Lower leg skin (tissue), 4 donors: ENCODE measurements at regions of chr21 and their contacts with region 1.

Region 1: DNA sequence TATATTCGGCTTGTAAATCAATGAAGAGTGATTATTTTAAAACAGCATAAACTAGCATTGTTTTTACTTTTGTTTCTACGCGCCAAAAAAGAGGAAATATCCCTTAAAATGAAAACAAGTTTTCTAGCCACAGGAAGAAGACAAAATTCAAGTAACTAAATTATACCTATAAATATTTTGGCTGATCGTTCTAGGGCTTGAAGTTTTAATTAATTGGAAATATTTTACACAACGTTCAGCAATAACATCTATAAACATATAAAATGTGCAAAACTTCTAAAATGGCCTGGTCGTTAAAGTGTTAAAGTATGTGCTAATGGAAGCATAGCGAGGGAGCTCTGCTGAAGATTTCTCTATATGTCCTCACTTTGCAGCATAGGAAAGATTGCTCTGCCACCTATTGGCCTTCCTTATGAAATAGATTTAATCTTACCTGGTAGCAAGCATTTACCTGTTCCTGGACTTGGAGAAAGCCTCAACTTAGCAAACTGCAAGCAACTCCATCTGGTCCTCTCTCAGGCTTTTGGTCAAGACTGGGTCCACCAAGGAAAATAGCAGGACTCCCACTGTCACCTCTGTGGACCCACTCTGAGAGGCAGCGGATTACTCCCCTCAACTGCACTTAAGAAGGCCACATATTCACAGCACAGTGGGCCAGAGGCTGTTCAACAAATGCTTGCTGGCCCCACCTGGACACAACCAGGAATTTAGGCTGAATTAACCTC is 351.3 kb upstream of the RUNX1 start:
- DNase-seq: peak in 1 of 2 donors; percentile 15
- H3K4me3 ChIP-seq: no peak overlapping the region
- CTCF ChIP-seq: no peak
- POLR2A ChIP-seq: no peak

Region 2: DNA sequence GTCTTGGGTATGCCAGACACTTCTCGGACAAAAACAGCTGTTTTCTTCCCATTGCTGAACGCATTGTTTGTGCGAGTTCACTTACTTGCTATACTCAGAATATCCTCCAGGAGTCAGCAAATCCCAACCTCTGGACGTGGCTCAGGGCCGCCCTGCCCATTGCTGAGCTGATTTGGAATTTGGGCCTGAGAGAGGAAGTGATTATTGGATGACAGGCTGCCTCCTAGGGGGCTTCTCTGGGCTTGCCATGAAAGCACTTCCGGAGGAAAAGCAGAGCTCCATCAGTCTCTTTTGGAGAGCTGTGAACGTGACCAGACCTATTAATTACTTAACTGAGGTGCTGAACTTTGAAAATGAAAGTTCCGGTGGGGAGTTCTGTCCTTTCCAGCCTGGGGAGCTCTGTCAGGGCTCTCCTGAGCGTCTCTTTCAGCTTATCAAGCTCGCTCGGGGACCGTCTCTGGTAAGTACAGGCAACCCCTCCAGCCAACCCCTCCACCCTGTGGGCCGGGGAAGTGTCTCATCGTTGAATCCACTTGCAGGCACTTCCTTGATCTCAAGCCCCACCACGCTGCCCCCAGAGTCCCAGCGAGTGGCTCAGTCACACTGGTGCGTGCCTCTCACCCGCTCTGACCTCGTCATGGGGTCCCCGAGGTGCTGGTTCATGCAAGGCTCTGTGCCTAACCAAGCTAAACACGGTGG is 654.7 kb before region 1 on chr21:
- intact Hi-C with region 1: loop called (anchors 5 kb)
- DNase-seq: peak; percentile 69 to 92
- H3K4me3 ChIP-seq: no peak overlapping the region
- CTCF ChIP-seq: peak in 1 of 3 donors; percentile 76
- POLR2A ChIP-seq: no peak

Region 3: GRCh38 chr21:34900376-34900775 is 500.0 kb before region 1 on chr21:
- intact Hi-C with region 1: loop called (anchors 2 kb)
- DNase-seq: no peak
- H3K4me3 ChIP-seq: no peak overlapping the region
- CTCF ChIP-seq: no peak
- POLR2A ChIP-seq: no peak

Region 4: DNA sequence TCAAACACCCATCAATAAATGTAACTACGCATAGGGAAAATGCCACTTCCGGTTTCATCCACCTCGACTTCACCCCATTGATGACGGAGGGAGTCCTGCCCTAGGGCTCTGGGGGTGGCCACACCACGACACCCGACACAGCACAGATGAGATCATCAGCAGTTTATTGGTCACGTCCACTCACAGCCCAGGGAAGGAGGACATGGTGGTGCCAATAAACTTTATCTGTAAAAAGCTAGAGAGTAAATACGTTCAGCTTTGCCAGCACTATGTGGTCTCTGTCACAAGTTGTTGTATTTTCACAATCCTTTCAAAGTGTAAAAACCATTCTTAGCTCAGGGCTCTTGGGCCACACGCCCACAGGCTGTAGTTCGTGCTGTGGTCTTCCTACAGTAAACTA is 643.7 kb after region 1 on chr21:
- intact Hi-C with region 1: loop called (anchors 5 kb)
- DNase-seq: no peak
- H3K4me3 ChIP-seq: no peak overlapping the region
- CTCF ChIP-seq: no peak
- POLR2A ChIP-seq: no peak